ENCODE measurements at regions of chr9 and their contacts with region 1.

Region 1: DNA sequence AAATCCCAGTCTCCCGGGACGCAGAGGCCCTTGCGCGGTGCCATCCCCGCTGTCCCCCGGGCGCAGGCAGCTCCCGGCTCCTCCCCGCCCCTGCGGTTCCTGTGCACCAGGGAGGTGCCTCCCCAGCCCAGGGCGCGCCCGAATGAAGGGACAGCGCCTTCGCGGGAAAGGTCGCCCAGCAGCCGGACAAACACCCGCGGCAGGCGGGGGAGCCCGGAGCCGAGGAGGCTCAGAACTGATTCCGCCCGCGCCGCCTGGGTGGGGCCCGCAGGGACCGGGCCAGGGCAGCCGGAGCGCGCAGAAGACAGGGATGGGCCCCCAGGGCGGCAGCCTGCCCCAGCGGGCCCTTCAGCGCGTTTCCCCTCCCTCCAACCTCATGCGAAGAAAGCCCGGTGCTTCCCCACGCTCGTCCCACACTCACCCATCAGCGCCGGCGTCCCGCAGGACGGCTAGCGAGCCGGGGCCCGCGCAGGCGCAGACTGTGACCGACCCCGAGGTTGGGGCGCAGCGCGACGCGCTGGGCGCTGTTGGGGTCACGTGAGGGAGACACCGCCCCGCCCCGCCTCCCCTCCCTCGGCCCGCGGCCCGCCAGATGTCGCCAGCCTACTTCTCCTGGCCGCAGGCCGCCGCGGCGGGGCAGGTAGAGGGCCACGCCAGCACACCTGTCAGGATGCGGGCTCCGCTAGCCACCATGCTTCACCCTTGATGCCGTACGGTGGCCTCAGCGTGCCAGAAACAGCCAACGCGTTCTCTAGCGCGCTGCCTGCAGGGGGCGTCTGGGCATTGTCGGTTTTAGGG is at the start of gene SLC25A51:
- DNase-seq: peak; percentile 91
- H3K4me3 Mint-ChIP-seq: peak within 1 kb of the TSS; percentile 84
- H3K27ac Mint-ChIP-seq: peak within 1 kb of the TSS; percentile 90
- H3K4me1 Mint-ChIP-seq: peaks cover 15% of the 10 kb centered on the region
- H3K27me3 Mint-ChIP-seq: peaks cover 2% of the 10 kb centered on the region
- total RNA-seq, gene SLC25A51: 29.7 and 31.4 TPM in 2 replicates

Region 2: DNA sequence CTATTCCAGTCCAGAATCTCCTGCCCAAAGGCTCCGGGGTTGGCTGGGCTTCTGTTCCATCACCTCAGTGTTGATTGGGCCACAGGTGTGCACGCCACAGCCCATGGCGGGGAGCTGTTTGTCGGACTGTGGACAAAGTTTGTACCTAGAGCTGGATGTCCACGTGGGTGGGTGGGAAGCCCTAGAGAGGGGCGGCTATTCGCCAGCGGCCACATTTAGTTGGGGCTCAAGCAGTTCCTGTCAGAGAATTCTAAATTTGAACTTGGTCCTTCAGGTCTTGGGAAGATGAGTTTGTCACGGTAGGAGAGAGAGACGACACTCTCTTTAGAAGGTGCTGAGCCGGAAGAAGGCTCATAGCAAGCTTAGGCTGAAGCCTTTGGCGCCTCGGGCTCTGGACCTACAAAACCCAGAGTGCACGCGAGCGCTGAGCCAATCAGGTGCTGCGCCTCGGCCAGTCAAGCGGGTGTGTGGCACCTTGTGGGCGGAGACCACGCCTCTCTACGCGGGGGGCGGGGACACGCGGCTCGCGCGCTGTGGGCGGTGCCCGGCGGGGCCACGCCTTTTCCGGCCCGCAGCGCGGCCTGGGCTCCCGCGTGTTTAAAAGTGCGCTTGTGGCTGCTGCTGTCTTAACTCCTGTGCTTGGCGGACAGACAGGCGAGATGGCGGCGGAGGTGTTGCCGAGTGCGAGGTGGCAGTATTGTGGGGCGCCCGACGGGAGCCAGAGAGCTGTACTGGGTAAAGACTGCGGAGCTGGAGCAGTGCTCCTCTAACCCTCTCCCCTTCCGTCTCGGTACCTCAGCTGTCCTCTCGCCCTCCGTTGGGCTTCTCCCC is 418.2 kb before region 1 on chr9 and contains the start of gene POLR1E:
- intact Hi-C with region 1: loop called (anchors 5 kb)
- DNase-seq: peak; percentile 95
- H3K4me3 Mint-ChIP-seq: peak within 1 kb of the TSS; percentile 100
- H3K27ac Mint-ChIP-seq: peak within 1 kb of the TSS; percentile 95
- H3K4me1 Mint-ChIP-seq: peaks cover 33% of the 10 kb centered on the region
- H3K27me3 Mint-ChIP-seq: peaks cover 5% of the 10 kb centered on the region
- total RNA-seq, gene POLR1E: 48.0 and 49.4 TPM in 2 replicates

Region 3: GRCh38 chr9:37693260-37693659 is 210.6 kb before region 1 on chr9:
- intact Hi-C with region 1: no loop called
- DNase-seq: no peak
- H3K4me3 Mint-ChIP-seq: no peak overlapping the region
- H3K27ac Mint-ChIP-seq: no peak overlapping the region
- H3K4me1 Mint-ChIP-seq: no peaks in the 10 kb centered on the region
- H3K27me3 Mint-ChIP-seq: peaks cover 35% of the 10 kb centered on the region

Region 4: DNA sequence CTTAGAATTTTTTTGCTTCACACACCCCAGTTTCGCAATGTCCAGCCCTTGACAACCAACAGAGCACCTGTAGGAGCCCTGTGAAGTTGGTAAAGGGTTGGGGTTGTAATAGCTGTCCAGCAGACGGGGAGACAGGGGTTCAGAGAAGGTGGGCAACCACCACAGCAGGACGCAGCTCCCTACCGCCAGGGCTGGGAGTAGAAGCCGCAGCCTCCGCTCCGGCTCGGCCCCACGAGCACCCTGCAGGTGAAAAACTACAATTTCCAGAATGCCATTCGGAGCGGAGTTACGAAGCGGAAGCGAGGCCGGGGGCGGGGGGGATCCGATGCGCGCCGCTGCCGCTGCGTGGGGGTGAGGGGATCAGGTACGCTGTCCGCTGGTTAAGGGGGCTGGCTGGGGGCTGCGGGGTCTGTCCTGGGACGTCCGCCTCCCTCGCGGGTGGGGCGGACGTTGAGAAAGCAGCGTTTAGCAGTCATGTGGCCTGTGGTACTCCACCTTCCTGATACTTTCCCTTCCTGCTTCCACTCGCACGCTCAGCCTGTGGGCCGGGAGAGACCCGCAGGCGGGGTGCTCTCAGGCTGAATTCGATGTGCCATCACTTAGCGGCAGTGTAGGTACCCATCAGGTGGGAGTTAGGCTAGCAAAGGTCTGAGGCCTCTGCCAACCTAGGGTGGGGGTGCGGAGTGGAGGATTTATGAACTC is 150.2 kb before region 1 on chr9 and contains the start of gene TRMT10B:
- intact Hi-C with region 1: loop called (anchors 1 kb)
- DNase-seq: peak; percentile 61
- H3K4me3 Mint-ChIP-seq: peak within 1 kb of the TSS; percentile 97
- H3K27ac Mint-ChIP-seq: peak within 1 kb of the TSS; percentile 91
- H3K4me1 Mint-ChIP-seq: peaks cover 17% of the 10 kb centered on the region
- H3K27me3 Mint-ChIP-seq: no peaks in the 10 kb centered on the region
- total RNA-seq, gene TRMT10B: 11.8 and 12.1 TPM in 2 replicates

Region 5: GRCh38 chr9:37836386-37836785 is 67.5 kb before region 1 on chr9:
- intact Hi-C with region 1: loop called (anchors 5 kb)
- DNase-seq: no peak
- H3K4me3 Mint-ChIP-seq: no peak overlapping the region
- H3K27ac Mint-ChIP-seq: no peak overlapping the region
- H3K4me1 Mint-ChIP-seq: peaks cover 18% of the 10 kb centered on the region
- H3K27me3 Mint-ChIP-seq: no peaks in the 10 kb centered on the region

Region 6: DNA sequence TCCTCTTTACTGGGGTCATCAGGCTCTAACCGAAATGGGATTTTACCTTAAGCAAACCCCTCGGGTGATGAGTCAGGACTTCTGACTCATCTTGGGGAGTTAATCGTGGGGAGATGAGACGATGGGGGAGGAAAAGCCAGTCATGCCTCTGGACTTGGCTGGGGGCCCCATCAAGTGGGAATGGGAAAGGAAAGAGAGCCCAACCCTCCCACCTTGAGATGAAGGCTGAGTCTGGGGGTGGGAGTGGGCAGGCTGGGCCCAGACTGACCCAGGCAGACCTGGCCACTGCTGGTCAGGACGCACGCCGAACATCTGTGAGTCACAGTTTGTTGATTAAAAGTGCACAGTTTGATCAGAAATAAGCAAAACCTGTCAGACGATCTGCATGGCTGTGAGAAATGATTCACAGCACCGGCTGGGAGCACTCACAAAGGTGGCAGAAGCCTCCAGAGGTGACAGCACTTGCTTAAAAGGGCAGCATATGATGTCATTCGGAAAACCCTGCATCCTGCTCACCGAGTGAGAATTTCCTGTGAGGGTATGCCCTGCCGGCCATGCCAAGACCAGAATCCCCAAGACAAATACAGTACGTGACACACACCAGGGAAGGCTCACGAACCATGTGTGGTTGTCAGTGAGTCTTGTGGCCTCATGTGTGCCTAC is 50.1 kb after region 1 on chr9:
- intact Hi-C with region 1: loop called (anchors 10 kb)
- DNase-seq: no peak
- H3K4me3 Mint-ChIP-seq: peak overlapping the region; percentile 22
- H3K27ac Mint-ChIP-seq: peak overlapping the region; percentile 96
- H3K4me1 Mint-ChIP-seq: peaks cover 30% of the 10 kb centered on the region
- H3K27me3 Mint-ChIP-seq: no peaks in the 10 kb centered on the region

Region 7: DNA sequence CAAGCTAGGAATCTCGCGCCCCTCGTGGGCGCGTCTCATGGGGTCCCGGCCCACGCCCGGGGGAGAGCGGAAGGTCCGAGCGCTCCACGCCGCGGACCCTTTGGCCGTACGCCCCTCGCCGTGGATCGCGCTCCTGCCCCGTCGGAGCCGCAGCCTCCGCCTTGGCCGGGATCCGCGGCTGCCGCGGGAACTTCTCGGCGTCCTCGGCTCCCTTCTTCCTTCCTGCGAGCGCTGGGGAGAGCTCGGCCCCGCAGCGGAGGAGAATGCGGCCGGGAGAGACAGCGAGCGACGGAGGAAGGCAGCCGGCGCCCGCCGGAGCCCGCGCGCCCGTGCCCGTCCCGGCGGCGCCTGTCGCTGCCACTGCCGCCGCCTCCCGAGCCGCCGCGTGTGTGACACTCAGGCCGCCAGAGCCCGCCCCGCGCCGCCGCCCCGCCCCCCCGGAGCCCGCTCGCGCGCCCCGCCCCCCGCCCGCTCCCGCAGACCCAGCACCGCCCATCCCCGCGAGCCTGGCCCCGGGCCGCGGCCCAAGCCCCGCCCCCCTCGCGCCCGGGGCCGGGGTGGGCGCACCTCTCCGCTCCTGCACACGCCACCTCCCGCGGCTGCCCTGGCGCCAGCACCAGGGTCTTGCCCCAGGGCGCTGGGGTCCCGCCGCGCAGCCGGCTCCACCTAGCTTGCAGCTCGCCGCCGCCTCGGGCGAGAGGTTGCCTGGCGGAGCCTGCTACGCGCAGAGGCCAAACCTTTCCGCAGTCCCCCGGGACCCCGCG is 165.2 kb after region 1 on chr9 and contains the start of gene SHB:
- intact Hi-C with region 1: loop called (anchors 1 kb)
- DNase-seq: peak; percentile 68
- H3K4me3 Mint-ChIP-seq: peak within 1 kb of the TSS; percentile 64
- H3K27ac Mint-ChIP-seq: no peak within 1 kb of the TSS
- H3K4me1 Mint-ChIP-seq: peaks cover 25% of the 10 kb centered on the region
- H3K27me3 Mint-ChIP-seq: peaks cover 33% of the 10 kb centered on the region
- total RNA-seq, gene SHB: 1.7 and 1.9 TPM in 2 replicates

Region 8: GRCh38 chr9:38392235-38393127 is 488.6 kb after region 1 on chr9 and contains the start of gene ALDH1B1:
- intact Hi-C with region 1: loop called (anchors 5 kb)
- DNase-seq: peak; percentile 70
- H3K4me3 Mint-ChIP-seq: peak within 1 kb of the TSS; percentile 96
- H3K27ac Mint-ChIP-seq: peak within 1 kb of the TSS; percentile 90
- H3K4me1 Mint-ChIP-seq: peaks cover 16% of the 10 kb centered on the region
- H3K27me3 Mint-ChIP-seq: peaks cover 22% of the 10 kb centered on the region
- total RNA-seq, gene ALDH1B1: 37.7 and 39.3 TPM in 2 replicates

Measured in activated T-helper 2 cell treated with anti-CD3 and anti-CD28 coated beads, Interferon-gamma antibody, Interleukin-2, Interleukin-4, amounts not matched to agents 10 μg/mL and 5 μg/mL and 100 μg/mL, durations not matched to agents 14 hours and 24 hours and 36 hours (primary cell).